Esophagus muscularis mucosa (tissue), 4 donors: ENCODE measurements at regions of chr2 and their contacts with region 1.

Region 1: DNA sequence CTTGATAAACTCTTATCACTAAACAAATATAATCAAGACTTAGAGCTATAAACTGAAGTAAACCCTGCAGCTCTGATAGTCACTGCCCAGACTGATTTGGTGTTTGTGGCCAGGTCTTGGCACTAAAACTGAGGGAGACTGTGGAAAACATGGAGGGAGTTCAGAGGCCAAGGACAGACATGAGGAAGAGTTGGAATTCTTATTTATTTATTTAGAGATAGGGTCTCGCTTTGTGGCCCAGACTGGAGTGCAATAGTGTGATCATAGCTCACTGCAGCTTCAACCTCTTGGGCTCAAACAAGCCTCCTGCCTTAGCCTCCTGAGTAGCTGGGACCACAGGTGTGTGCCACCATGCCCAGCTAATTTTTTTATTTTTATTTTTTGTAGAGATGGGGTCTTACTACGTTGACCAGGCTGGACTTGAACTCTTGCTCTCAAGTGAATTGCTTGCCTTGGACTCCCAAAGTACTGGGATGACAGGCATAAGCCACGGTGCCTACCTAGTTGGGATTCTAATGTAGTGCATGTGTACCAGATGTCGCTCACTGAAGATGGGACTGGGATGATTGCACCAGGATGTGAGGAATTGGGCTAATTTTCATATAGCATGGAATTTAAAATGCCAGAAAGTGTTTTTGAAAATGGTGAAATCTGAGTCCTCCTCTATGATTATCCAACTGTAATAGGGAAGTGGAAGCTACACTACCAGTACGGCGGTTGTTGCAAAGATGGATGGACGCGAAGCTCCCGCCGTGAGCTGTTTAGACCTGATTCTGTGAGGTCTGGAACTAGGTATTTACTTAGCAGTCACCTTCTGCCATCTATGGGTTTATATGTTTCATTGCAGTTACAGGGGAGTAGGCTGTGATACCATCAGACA is 52.7 kb upstream of the CTLA4 start:
- DNase-seq: peak; percentile 89
- H3K4me3 ChIP-seq: peak overlapping the region in 1 of 4 donors; percentile 10
- H3K27ac ChIP-seq: no peak overlapping the region
- H3K4me1 ChIP-seq: peaks cover 6 to 21% (median 8%) of the 10 kb centered on the region in 4 donors
- H3K27me3 ChIP-seq: no peaks in the 10 kb centered on the region
- CTCF ChIP-seq: peak; percentile 60 to 79 (median 77)
- EP300 ChIP-seq: no peak
- POLR2A ChIP-seq: no peak

Region 2: GRCh38 chr2:203650860-203651613 is 163.9 kb before region 1 on chr2:
- intact Hi-C with region 1: loop called (anchors 10 kb)
- DNase-seq: no peak
- H3K4me3 ChIP-seq: no peak overlapping the region
- H3K27ac ChIP-seq: peak overlapping the region; percentile 23 to 62 (median 39)
- H3K4me1 ChIP-seq: peaks cover 22 to 33% (median 32%) of the 10 kb centered on the region in 4 donors
- H3K27me3 ChIP-seq: no peaks in the 10 kb centered on the region
- CTCF ChIP-seq: peak in 2 of 3 experiments; percentile 19 to 39
- EP300 ChIP-seq: no peak
- POLR2A ChIP-seq: no peak

Region 3: DNA sequence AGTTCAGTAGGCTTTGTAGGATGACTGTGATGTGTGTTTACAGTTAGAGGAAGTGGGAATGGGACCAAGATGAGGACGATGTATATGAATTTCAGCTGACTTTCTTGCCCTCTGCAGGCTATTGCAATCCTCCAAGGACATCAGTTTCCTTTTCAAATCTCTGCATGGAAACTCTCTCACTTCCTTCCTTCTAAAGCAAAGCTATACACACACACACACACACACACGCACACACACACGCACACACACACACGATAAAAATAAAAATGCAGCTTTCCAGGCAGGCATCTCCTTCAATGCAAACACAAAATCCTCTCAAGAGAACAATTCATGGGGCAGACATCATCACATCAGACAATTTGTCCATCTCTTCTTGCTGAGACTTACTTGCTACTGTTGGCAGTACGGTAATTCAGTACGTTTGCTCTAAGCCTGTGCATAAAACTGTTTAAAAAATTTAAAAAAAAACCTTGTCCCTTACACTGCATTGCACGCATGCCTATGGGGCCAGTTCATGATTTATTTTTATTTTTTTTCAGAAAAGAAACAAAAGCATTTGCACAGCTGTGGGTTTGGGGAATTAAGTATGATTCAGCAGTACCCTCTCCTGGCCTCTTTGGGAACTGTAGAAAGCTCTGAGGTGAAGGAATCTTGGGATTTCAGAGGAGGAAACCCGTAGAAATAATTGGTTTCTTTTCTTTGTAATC is 94.5 kb after region 1 on chr2:
- intact Hi-C with region 1: loop called (anchors 5 kb)
- DNase-seq: no peak
- H3K4me3 ChIP-seq: peak overlapping the region; percentile 26 to 40 (median 32)
- H3K27ac ChIP-seq: peak overlapping the region in 3 of 4 donors; percentile 5 to 42 (median 7)
- H3K4me1 ChIP-seq: peaks cover 0 to 24% (median 18%) of the 10 kb centered on the region in 4 donors
- H3K27me3 ChIP-seq: no peaks in the 10 kb centered on the region
- CTCF ChIP-seq: peak; percentile 74 to 78 (median 76)
- EP300 ChIP-seq: no peak
- POLR2A ChIP-seq: no peak